ENCODE measurements at regions of chr1 and their contacts with region 1.

Region 1: DNA sequence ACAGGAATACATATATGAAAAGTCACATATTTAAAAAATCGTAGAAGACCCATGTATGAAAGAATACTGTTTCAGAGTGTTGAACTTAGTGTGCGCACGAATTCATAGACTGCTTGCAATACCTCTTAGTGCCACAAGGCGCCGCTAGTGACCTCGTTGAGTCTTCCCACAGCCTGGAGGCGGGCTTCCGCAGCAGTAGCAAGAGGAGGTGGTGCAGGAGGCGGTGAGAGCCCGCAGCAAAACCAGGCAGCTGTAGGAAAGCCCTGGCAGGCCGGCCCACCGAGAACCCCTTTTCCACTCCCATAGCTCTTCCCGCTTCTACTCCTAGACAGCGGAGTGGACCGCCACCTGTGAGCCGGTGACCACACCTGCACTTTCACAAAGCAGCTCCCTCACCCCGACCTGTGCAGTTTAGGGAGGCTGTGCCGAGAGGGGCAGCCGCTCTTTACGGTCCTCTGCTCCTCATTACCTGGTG is 23.5 kb downstream of the MTARC1 start:
- DNase-seq: peak; percentile 91
- H3K4me3 Mint-ChIP-seq: no peak overlapping the region
- H3K27ac Mint-ChIP-seq: no peak overlapping the region
- H3K4me1 Mint-ChIP-seq: no peaks in the 10 kb centered on the region
- H3K27me3 Mint-ChIP-seq: no peaks in the 10 kb centered on the region
- CTCF ChIP-seq: peak; percentile 99

Region 2: DNA sequence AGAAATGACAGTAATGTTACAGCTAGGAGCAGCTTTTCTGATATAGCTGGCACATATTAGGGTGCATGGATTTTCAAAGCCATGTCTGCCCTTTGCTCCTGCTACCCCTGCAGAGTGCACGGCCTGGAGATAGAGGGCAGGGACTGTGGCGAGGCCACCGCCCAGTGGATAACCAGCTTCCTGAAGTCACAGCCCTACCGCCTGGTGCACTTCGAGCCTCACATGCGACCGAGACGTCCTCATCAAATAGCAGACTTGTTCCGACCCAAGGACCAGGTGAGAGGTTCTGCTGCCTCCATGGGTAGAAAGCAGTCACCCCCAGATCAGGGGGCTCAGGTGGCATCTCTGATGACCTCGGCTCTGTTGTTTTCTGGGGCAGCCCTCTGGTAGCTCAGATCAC is 13.7 kb before region 1 on chr1:
- CTCF ChIA-PET with region 1: interaction called, 142 read pairs
- POLR2A ChIA-PET with region 1: interaction called, 3 read pairs
- intact Hi-C with region 1: no loop called
- DNase-seq: no peak
- H3K4me3 Mint-ChIP-seq: no peak overlapping the region
- H3K27ac Mint-ChIP-seq: no peak overlapping the region
- H3K4me1 Mint-ChIP-seq: peaks cover 4% of the 10 kb centered on the region
- H3K27me3 Mint-ChIP-seq: no peaks in the 10 kb centered on the region
- CTCF ChIP-seq: no peak

Region 3: GRCh38 chr1:220825819-220826551 is 15.8 kb after region 1 on chr1:
- CTCF ChIA-PET with region 1: interaction called, 63 read pairs
- POLR2A ChIA-PET with region 1: interaction called, 4 read pairs
- intact Hi-C with region 1: no loop called
- DNase-seq: peak; percentile 60
- H3K4me3 Mint-ChIP-seq: no peak overlapping the region
- H3K27ac Mint-ChIP-seq: no peak overlapping the region
- H3K4me1 Mint-ChIP-seq: peaks cover 10% of the 10 kb centered on the region
- H3K27me3 Mint-ChIP-seq: peaks cover 17% of the 10 kb centered on the region
- CTCF ChIP-seq: no peak

Region 4: DNA sequence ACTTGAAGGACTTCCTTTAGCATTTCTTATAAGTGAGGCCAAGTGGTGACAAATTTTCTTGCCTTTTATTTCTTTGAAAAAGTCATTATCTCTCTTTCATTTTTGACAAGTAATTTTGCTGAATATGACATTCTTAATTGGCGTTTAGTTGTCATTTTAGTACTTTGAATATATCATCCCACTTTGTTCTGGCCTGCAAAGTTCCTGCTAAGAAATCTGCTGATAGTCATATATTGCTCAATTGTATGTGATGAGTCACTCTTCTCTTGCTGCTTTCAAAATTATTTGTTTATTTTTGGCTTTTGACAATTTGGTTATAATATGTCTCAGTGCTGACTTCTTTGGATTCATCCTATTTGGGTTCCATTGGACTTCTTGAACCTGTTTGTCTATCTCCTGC is 619.0 kb after region 1 on chr1:
- CTCF ChIA-PET with region 1: interaction called, 37 read pairs
- POLR2A ChIA-PET with region 1: no interaction called
- intact Hi-C with region 1: loop called (anchors 2 kb)
- DNase-seq: peak; percentile 83
- H3K4me3 Mint-ChIP-seq: no peak overlapping the region
- H3K27ac Mint-ChIP-seq: peak overlapping the region; percentile 54
- H3K4me1 Mint-ChIP-seq: peaks cover 15% of the 10 kb centered on the region
- H3K27me3 Mint-ChIP-seq: no peaks in the 10 kb centered on the region
- CTCF ChIP-seq: no peak